AG04449 (cell line): ENCODE measurements at regions of chr12 and their contacts with region 1.

Region 1: GRCh38 chr12:56117778-56118687 is at the start of gene ZC3H10:
- DNase-seq: peak; percentile 95
- H3K4me3 ChIP-seq: peak within 1 kb of the TSS; percentile 94
- CTCF ChIP-seq: peak; percentile 80

Region 2: DNA sequence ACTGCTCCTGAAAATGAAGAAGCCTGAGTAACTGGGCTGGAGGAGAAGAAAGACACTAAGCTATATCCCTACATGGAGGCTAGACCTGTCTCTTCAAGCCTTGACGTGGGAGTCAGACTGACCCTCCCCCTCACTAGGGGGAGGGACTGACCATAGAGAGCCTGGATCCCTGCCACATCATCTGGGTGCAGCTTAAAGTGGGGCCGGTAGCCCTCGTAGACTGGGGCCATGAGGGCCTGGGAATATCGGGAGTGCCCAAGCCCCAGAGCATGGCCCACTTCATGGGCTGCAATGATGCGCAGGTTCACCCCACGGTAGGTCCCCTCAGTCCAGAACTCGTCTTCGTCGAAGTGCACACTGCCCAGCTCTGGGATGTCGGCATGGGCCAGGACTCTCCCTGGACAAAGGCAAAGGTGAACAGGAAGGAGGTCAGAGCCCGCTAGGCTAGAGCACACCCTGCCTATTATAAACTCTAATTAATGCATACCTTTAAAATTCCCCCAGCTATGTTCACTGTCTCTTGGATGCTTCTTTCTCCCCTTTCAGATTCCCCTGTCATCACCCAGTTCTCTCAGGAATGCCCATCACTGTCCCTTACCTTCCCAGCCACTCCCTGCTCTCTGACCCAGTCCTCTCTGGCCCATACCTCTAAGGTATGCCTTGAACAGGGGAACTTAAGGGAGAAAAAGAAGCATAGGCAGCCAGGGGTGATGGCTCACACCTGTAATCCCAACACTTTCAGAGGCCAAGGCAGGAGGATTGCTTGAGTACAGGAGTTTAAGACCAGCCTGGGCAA is 278.5 kb before region 1 on chr12:
- CTCF ChIA-PET with region 1: no interaction called
- POLR2A ChIA-PET with region 1: no interaction called
- DNase-seq: no peak
- H3K4me3 ChIP-seq: no peak overlapping the region
- CTCF ChIP-seq: no peak

Region 3: DNA sequence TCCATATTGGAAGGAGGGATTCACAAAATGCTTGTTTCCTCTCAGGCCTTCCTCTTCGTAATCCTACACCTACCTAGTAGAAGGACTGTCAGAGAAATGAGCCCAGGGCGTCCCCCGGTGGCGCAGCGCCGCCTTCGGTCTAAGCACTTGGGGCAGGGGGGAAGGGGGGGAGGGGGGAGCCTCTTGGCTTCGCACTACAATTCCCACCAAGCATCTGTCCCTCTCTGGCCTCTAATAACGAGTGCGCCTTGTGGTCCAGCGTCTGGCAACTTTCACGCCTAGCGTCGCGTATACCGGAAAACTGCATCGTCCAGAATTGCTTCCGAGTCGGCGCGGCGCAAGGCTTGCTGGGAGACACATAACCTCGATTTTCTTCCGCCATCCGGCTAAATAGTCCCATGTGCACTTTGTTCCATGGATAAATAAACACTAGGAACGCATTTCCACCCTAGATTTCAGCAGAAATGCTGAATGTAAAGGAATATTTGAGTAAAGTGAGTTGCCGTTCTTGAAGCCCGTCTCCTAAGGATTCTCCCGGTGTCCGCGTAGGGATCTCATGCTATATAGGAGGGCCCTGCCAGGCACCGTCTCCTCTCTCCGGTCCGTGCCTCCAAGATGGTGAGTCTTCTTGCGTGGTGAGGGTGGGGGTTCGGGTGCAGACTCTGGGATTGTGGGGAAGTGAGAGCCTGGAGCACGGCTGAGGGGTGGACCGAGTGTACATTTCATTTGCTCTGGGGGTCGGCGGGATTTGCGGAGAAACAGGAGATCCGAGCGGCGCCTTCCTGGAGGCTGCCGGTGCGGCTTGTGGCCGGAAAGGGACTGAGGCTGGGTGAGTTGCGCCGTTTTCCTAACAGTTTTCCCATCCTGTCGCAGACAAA is 76.2 kb before region 1 on chr12 and contains the start of gene RPS26:
- CTCF ChIA-PET with region 1: interaction called, 51 read pairs
- POLR2A ChIA-PET with region 1: interaction called, 10 read pairs
- DNase-seq: peak; percentile 96
- H3K4me3 ChIP-seq: peak within 1 kb of the TSS; percentile 95
- CTCF ChIP-seq: peak; percentile 64

Region 4: GRCh38 chr12:56104109-56104814 is 13.8 kb before region 1 on chr12 and contains the start of gene PA2G4:
- CTCF ChIA-PET with region 1: interaction called, 34 read pairs
- POLR2A ChIA-PET with region 1: interaction called, 49 read pairs
- DNase-seq: peak; percentile 85
- H3K4me3 ChIP-seq: peak within 1 kb of the TSS; percentile 88
- CTCF ChIP-seq: no peak

Region 5: DNA sequence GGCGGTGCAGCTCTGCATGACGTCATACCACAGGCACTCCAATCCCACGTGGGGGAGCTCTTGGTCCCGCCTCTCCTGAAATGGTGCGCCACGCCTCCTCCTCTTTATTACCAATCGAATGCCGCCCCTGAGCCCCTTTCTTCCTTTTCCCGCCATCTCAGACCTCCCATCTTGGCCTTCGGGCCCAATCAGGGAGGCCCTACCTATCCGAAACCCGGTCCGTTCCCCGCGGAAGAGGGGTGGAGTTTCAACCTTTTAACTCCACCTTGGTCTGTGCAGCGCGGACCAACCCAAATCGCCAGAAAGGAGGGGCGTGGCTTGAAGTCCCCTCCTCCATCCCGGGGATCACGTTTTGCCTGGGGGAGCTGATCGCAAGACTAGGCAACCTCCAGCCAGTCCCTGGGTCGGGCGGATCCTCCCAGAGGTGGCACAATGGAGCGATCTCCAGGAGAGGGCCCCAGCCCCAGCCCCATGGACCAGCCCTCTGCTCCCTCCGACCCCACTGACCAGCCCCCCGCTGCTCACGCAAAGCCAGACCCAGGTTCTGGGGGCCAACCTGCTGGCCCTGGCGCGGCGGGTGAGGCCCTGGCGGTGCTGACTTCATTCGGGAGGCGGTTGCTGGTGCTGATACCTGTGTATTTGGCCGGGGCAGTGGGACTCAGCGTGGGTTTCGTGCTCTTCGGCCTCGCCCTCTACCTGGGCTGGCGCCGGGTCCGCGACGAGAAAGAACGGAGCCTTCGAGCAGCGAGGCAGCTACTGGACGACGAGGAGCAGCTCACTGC is 10.0 kb after region 1 on chr12 and contains the start of gene ESYT1:
- CTCF ChIA-PET with region 1: interaction called, 57 read pairs
- POLR2A ChIA-PET with region 1: interaction called, 28 read pairs
- DNase-seq: peak; percentile 98
- H3K4me3 ChIP-seq: peak within 1 kb of the TSS; percentile 78
- CTCF ChIP-seq: no peak

Region 6: GRCh38 chr12:56143870-56144269 is 25.8 kb after region 1 on chr12:
- CTCF ChIA-PET with region 1: interaction called, 11 read pairs
- POLR2A ChIA-PET with region 1: interaction called, 3 read pairs
- DNase-seq: no peak
- H3K4me3 ChIP-seq: no peak overlapping the region
- CTCF ChIP-seq: no peak

Region 7: GRCh38 chr12:56158029-56158925 is 40.2 kb after region 1 on chr12 and contains the start of gene MYL6:
- CTCF ChIA-PET with region 1: interaction called, 35 read pairs
- POLR2A ChIA-PET with region 1: interaction called, 6 read pairs
- DNase-seq: peak; percentile 86
- H3K4me3 ChIP-seq: peak within 1 kb of the TSS; percentile 99
- CTCF ChIP-seq: no peak

Region 8: GRCh38 chr12:56178347-56178746 is 60.3 kb after region 1 on chr12:
- CTCF ChIA-PET with region 1: interaction called, 11 read pairs
- POLR2A ChIA-PET with region 1: no interaction called
- DNase-seq: no peak
- H3K4me3 ChIP-seq: no peak overlapping the region
- CTCF ChIP-seq: no peak

Region 9: GRCh38 chr12:56521590-56522371 is 403.7 kb after region 1 on chr12 and contains the start of gene RBMS2:
- CTCF ChIA-PET with region 1: no interaction called
- POLR2A ChIA-PET with region 1: no interaction called
- DNase-seq: peak; percentile 63
- H3K4me3 ChIP-seq: peak within 1 kb of the TSS; percentile 60
- CTCF ChIP-seq: no peak